IMR-90 (cell line): ENCODE measurements at regions of chr13 and their contacts with region 1.

Region 1: GRCh38 chr13:40789275-40790133 is at the start of gene SLC25A15:
- DNase-seq: peak; percentile 72
- ATAC-seq: peak; percentile 91
- H3K4me3 ChIP-seq: peak within 1 kb of the TSS; percentile 78
- H3K27ac ChIP-seq: peak within 1 kb of the TSS; percentile 97
- H3K4me1 ChIP-seq: peaks cover 4% of the 10 kb centered on the region; the same call in 1 of the 2 replicates
- H3K27me3 ChIP-seq: no peaks in the 10 kb centered on the region
- CTCF ChIP-seq: peak; percentile 43
- POLR2A ChIP-seq: peak; percentile 58; the same call in 1 of the 2 replicates
- RAD21 ChIP-seq: peak; percentile 45
- total RNA-seq, gene SLC25A15: 13.3 and 16.1 TPM in 2 replicates

Region 2: DNA sequence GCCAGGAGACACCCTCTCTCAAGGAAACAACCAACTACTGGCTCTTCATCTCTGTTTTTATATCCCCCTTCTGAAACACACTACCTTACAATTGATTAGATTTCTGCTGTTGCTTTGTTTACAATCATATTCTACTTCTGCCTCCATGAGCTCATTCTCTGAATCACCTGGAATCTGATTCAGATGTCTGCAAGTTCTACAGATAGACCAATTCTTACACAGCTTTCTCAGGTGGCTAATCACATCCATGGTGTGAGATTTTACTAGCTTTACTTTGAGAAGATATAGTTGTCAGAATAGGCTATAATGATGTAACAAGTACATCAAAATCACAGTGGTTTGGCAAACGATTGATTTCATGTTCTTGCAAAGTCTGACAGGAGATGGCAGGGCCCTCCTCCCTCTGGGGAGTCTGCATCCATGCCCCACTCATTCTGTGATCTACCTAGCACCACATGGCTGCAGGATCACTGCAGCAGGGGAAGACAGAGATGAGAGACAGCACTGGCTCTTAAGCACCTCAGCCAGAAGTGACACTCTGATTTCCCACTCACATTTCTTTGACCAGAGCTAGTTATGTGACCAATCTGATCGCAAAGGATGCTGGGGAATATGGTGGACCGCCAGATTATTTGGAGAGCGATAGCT is 366.8 kb before region 1 on chr13:
- CTCF ChIA-PET with region 1: no interaction called
- POLR2A ChIA-PET with region 1: no interaction called
- dilution Hi-C with region 1: no loop called
- in situ Hi-C with region 1: no loop called
- intact Hi-C with region 1: no loop called
- DNase-seq: no peak
- ATAC-seq: no peak
- H3K4me3 ChIP-seq: no peak overlapping the region
- H3K27ac ChIP-seq: no peak overlapping the region
- H3K4me1 ChIP-seq: no peaks in the 10 kb centered on the region
- H3K27me3 ChIP-seq: 0 out of 2 replicates have a peak, but pooled peaks cover 1% of the 10 kb centered on the region
- CTCF ChIP-seq: no peak
- POLR2A ChIP-seq: no peak
- RAD21 ChIP-seq: no peak

Region 3: GRCh38 chr13:40920826-40921225 is 131.3 kb after region 1 on chr13:
- CTCF ChIA-PET with region 1: no interaction called
- POLR2A ChIA-PET with region 1: no interaction called
- dilution Hi-C with region 1: no loop called
- in situ Hi-C with region 1: no loop called
- intact Hi-C with region 1: loop called (anchors 2 kb)
- DNase-seq: peak; percentile 56
- ATAC-seq: peak; percentile 40
- H3K4me3 ChIP-seq: peak overlapping the region; percentile 50
- H3K27ac ChIP-seq: peak overlapping the region; percentile 77
- H3K4me1 ChIP-seq: peaks cover 2% of the 10 kb centered on the region
- H3K27me3 ChIP-seq: no peaks in the 10 kb centered on the region
- CTCF ChIP-seq: no peak
- POLR2A ChIP-seq: no peak
- RAD21 ChIP-seq: no peak

Region 4: DNA sequence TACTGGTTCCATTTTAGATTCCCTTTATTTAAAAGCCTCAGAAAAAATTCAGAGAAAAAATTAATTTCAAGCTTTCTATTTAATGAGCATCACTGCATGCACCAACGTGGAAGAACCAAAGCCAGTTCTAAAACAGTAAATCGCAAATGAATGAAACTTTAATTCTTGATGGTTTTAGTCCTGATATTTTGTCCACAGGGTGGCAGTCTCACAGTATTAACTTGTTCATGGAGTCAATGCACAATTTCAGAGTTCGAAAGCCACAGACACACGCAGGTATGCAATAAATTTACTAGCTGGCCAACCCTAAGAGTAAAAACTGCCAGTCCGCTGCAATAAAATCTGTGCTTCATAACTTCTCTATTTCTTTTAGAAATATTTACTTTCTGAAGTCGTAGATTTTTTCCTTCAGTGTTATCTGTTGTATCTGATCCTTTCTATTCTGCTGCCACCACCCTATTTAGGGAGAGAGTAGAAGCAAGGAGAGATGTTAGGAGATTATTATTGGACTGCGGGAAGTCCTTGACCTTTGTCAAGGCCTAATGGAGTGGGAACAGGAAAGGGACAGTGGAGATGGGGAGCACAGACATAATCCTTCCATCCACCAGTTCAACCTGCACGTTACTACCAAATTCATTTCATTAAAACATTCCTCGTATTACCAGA is 264.8 kb after region 1 on chr13:
- CTCF ChIA-PET with region 1: no interaction called
- POLR2A ChIA-PET with region 1: no interaction called
- dilution Hi-C with region 1: no loop called
- in situ Hi-C with region 1: loop called (anchors 10 kb)
- intact Hi-C with region 1: no loop called
- DNase-seq: peak; percentile 64
- ATAC-seq: peak; percentile 45
- H3K4me3 ChIP-seq: no peak overlapping the region
- H3K27ac ChIP-seq: no peak overlapping the region
- H3K4me1 ChIP-seq: peaks cover 14% of the 10 kb centered on the region
- H3K27me3 ChIP-seq: no peaks in the 10 kb centered on the region
- CTCF ChIP-seq: peak; percentile 53
- POLR2A ChIP-seq: no peak
- RAD21 ChIP-seq: peak; percentile 40

Region 5: GRCh38 chr13:41061075-41061913 is 271.8 kb after region 1 on chr13 and contains the start of gene WBP4:
- CTCF ChIA-PET with region 1: interaction called, 3 read pairs
- POLR2A ChIA-PET with region 1: no interaction called
- dilution Hi-C with region 1: no loop called
- in situ Hi-C with region 1: loop called (anchors 10 kb)
- intact Hi-C with region 1: loop called (anchors 2 kb)
- DNase-seq: peak; percentile 95
- ATAC-seq: peak; percentile 70
- H3K4me3 ChIP-seq: peak within 1 kb of the TSS; percentile 82
- H3K27ac ChIP-seq: peak within 1 kb of the TSS; percentile 93
- H3K4me1 ChIP-seq: peaks cover 6% of the 10 kb centered on the region
- H3K27me3 ChIP-seq: no peaks in the 10 kb centered on the region
- CTCF ChIP-seq: peak; percentile 20; the same call in 1 of the 2 replicates
- POLR2A ChIP-seq: peak; percentile 68; the same call in 1 of the 2 replicates
- RAD21 ChIP-seq: no peak; the same call in 1 of the 2 replicates
- total RNA-seq, gene WBP4: 4.3 and 11.4 TPM in 2 replicates